ENCODE measurements at regions of chr4 and their contacts with region 1.

Region 1: GRCh38 chr4:83110223-83110945 is 4.1 kb downstream of the PLAC8 start:
- DNase-seq: peak; percentile 64
- ATAC-seq: peak; percentile 95
- H3K4me3 ChIP-seq: peak overlapping the region; percentile 59
- H3K27ac ChIP-seq: no peak overlapping the region
- H3K4me1 ChIP-seq: peaks cover 1% of the 10 kb centered on the region; the same call in 1 of the 2 replicates
- H3K27me3 ChIP-seq: 0 out of 2 replicates have a peak, but pooled peaks cover 1% of the 10 kb centered on the region
- CTCF ChIP-seq: peak; percentile 66
- POLR2A ChIP-seq: no peak
- RAD21 ChIP-seq: peak; percentile 35; the same call in 1 of the 2 replicates

Region 2: GRCh38 chr4:83074086-83074704 is 36.2 kb before region 1 on chr4:
- CTCF ChIA-PET with region 1: interaction called, 5 read pairs
- POLR2A ChIA-PET with region 1: no interaction called
- dilution Hi-C with region 1: no loop called
- in situ Hi-C with region 1: no loop called
- intact Hi-C with region 1: loop called (anchors 2 kb)
- DNase-seq: peak; percentile 82
- ATAC-seq: peak; percentile 62
- H3K4me3 ChIP-seq: no peak overlapping the region
- H3K27ac ChIP-seq: no peak overlapping the region; the same call in 1 of the 2 replicates
- H3K4me1 ChIP-seq: peaks cover 4% of the 10 kb centered on the region
- H3K27me3 ChIP-seq: no peaks in the 10 kb centered on the region
- CTCF ChIP-seq: peak; percentile 72
- POLR2A ChIP-seq: no peak
- RAD21 ChIP-seq: peak; percentile 69

Region 3: DNA sequence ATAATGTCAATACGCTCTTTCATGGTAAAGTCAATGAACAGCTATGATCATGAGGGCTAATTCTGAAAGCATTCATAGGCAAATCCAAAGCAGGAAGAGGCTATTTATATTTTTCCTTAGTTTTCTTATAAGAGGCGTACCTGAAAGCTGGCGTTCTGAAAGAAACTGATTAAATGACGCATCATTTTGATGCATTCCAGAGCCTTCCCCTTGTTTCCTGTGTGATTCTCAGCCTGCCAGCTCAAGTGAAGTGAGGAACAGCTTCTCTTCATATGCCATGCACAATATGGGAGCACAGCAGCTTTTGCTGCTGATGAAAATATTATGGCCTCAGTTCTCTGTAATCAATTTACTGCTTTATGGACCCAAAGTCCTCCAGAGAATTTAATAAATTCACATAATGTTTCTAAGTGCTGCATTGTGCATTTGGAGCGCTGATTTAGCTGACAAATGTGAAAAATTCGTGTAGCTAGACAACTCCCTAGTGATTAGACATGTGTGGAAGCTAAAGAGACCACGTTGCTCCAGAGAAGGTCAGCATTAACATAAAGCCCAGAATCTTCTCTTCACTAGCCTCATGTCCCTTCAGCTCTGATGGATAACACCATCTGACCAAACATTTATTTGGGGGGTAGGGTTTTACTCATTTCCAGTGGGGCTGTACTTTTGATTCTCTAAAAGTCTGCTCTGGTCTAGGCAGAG is 536.3 kb after region 1 on chr4:
- CTCF ChIA-PET with region 1: no interaction called
- POLR2A ChIA-PET with region 1: no interaction called
- dilution Hi-C with region 1: no loop called
- in situ Hi-C with region 1: no loop called
- intact Hi-C with region 1: no loop called
- DNase-seq: no peak
- ATAC-seq: no peak
- H3K4me3 ChIP-seq: no peak overlapping the region
- H3K27ac ChIP-seq: no peak overlapping the region
- H3K4me1 ChIP-seq: no peaks in the 10 kb centered on the region
- H3K27me3 ChIP-seq: peaks cover 13% of the 10 kb centered on the region
- CTCF ChIP-seq: no peak
- POLR2A ChIP-seq: no peak
- RAD21 ChIP-seq: no peak

Measured in IMR-90 (cell line).